CD4-positive, alpha-beta memory T cell (primary cell): ENCODE measurements at regions of chr10 and their contacts with region 1.

Region 1: GRCh38 chr10:22022257-22023032 is 18.9 kb upstream of the DNAJC1 start:
- DNase-seq: peak; percentile 51 to 75 (median 60)
- H3K4me3 ChIP-seq: peak overlapping the region in 1 of 2 donors; percentile 39
- H3K4me3 Mint-ChIP-seq: peak overlapping the region; percentile 69 to 91 (median 86)
- H3K27ac ChIP-seq: peak overlapping the region; percentile 45
- H3K27ac Mint-ChIP-seq: peak overlapping the region; percentile 75 to 97 (median 95)
- H3K4me1 ChIP-seq: peaks cover 18% of the 10 kb centered on the region
- H3K4me1 Mint-ChIP-seq: peaks cover 15 to 21% (median 19%) of the 10 kb centered on the region in 4 donors
- H3K27me3 ChIP-seq: no peaks in the 10 kb centered on the region
- H3K27me3 Mint-ChIP-seq: peaks cover 0 to 4% of the 10 kb centered on the region in 2 donors

Region 2: DNA sequence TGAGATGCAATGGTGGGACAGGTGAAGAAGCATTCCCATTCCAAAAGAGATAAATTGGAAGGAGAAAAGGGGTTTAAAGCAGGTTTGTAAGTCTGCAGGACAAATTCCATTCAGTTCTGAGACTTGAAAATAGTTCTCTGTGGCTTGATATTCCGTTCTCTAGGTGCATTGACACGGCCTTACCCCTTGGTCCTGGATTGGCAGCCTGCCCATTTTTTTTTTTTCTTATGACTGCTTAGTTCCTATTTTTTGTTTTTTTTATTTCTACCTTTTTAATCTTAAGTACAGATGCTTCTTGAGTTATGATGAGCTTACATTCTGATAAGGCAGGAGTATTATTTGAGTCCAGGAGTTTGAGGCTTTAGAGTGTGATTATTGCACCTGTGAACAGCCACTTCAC is 417.8 kb before region 1 on chr10:
- CTCF ChIA-PET with region 1: no interaction called
- POLR2A ChIA-PET with region 1: no interaction called
- intact Hi-C with region 1: no loop called
- DNase-seq: no peak
- H3K4me3 ChIP-seq: no peak overlapping the region
- H3K4me3 Mint-ChIP-seq: no peak overlapping the region
- H3K27ac ChIP-seq: no peak overlapping the region
- H3K27ac Mint-ChIP-seq: peak overlapping the region in 1 of 7 donors; percentile 14
- H3K4me1 ChIP-seq: peaks cover 7% of the 10 kb centered on the region
- H3K4me1 Mint-ChIP-seq: peaks cover 8 to 32% (median 28%) of the 10 kb centered on the region in 4 donors
- H3K27me3 ChIP-seq: no peaks in the 10 kb centered on the region
- H3K27me3 Mint-ChIP-seq: no peaks in the 10 kb centered on the region

Region 3: GRCh38 chr10:22058201-22058600 is 35.8 kb after region 1 on chr10:
- CTCF ChIA-PET with region 1: interaction called, 3 read pairs
- POLR2A ChIA-PET with region 1: no interaction called
- intact Hi-C with region 1: loop called (anchors 1 kb)
- DNase-seq: no peak
- H3K4me3 ChIP-seq: no peak overlapping the region
- H3K4me3 Mint-ChIP-seq: no peak overlapping the region
- H3K27ac ChIP-seq: no peak overlapping the region
- H3K27ac Mint-ChIP-seq: no peak overlapping the region
- H3K4me1 ChIP-seq: peaks cover 11% of the 10 kb centered on the region
- H3K4me1 Mint-ChIP-seq: peaks cover 10 to 24% (median 13%) of the 10 kb centered on the region in 4 donors
- H3K27me3 ChIP-seq: no peaks in the 10 kb centered on the region
- H3K27me3 Mint-ChIP-seq: peaks cover 1 to 10% of the 10 kb centered on the region in 2 donors